ENCODE measurements at regions of chr16 and their contacts with region 1.

Region 1: DNA sequence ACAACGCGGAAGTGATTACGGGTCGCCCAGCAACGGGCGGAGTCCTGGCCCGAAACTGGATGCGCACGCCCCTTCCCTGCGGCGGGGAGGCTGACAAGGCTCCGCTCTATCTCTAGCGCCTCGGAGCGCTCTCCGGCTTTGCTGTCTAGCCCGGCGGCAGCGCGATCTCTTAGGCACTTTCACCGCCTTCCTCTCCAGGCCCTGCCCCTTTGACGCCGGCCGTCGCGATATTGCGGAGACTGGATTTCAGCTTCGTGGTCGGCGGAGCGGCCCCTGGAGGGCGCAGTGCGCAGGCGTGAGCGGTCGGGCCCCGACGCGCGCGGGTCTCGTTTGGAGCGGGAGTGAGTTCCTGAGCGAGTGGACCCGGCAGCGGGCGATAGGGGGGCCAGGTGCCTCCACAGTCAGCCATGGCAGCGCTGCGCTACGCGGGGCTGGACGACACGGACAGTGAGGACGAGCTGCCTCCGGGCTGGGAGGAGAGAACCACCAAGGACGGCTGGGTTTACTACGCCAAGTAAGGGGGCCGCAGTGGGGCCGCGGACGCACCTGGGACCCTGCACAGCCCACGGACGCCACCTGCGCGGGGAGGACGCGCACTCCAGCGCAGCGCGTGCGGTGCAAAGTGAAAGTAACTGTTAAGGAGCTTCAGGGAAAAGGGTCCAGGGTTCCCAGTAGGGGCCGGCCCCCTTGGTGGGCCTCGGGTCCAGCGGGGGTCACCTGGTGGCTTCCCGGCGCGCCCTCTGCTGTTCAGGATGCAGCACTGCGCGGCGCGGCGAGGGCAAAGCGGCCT is at the start of gene WWOX:
- DNase-seq: peak; percentile 88 to 99 (median 96)
- ATAC-seq: peak; percentile 93 to 96 (median 94)
- H3K4me3 ChIP-seq: peak within 1 kb of the TSS; percentile 75 to 79
- H3K4me3 Mint-ChIP-seq: peak within 1 kb of the TSS; percentile 86 to 88 (median 87)
- H3K27ac ChIP-seq: peak within 1 kb of the TSS; percentile 84
- H3K27ac Mint-ChIP-seq: peak within 1 kb of the TSS; percentile 95 to 96
- H3K4me1 ChIP-seq: peaks cover 5 to 26% of the 10 kb centered on the region in 2 experiments
- H3K4me1 Mint-ChIP-seq: peaks cover 27 to 34% (median 28%) of the 10 kb centered on the region in 3 donors
- H3K27me3 ChIP-seq: no peaks in the 10 kb centered on the region
- H3K27me3 Mint-ChIP-seq: peaks cover 2 to 5% of the 10 kb centered on the region in 2 donors
- total RNA-seq, gene WWOX: 21.2 to 26.0 (median 22.6) TPM

Region 2: GRCh38 chr16:77199211-77199610 is 900.4 kb before region 1 on chr16 and contains the start of gene SYCE1L:
- CTCF ChIA-PET with region 1: no interaction called
- POLR2A ChIA-PET with region 1: no interaction called
- DNase-seq: no peak
- ATAC-seq: no peak
- H3K4me3 ChIP-seq: no peak within 1 kb of the TSS
- H3K4me3 Mint-ChIP-seq: no peak within 1 kb of the TSS
- H3K27ac ChIP-seq: no peak within 1 kb of the TSS
- H3K27ac Mint-ChIP-seq: no peak within 1 kb of the TSS
- H3K4me1 ChIP-seq: peaks cover 0 to 5% of the 10 kb centered on the region in 2 experiments
- H3K4me1 Mint-ChIP-seq: peaks cover 9 to 20% (median 9%) of the 10 kb centered on the region in 3 donors
- H3K27me3 ChIP-seq: no peaks in the 10 kb centered on the region
- H3K27me3 Mint-ChIP-seq: no peaks in the 10 kb centered on the region
- total RNA-seq, gene SYCE1L: 4.0 to 18.0 (median 16.7) TPM

Region 3: DNA sequence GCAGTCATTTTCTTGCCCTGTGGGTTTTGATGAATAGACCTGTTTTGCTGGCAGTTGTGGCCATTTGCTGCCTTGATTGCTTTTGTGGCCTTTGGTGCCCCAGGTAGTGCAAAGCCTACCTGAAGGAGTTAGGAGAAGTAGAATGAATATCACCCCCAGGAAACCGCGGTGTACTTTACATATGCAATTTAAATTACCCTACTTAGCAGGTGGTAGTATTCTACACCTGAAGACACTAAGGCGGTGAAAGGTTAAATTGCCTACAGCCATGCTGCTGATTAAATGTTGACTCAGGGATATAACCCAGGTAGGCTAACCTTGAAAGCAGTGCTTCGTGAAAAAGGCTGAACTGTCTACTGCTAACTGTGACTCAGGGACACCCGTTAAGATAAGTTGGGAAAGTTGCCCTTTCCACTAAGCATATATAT is 27.3 kb before region 1 on chr16:
- CTCF ChIA-PET with region 1: no interaction called
- POLR2A ChIA-PET with region 1: interaction called in 1 of 2 experiments, 20 read pairs
- DNase-seq: no peak
- ATAC-seq: no peak
- H3K4me3 ChIP-seq: no peak overlapping the region
- H3K4me3 Mint-ChIP-seq: no peak overlapping the region
- H3K27ac ChIP-seq: no peak overlapping the region
- H3K27ac Mint-ChIP-seq: no peak overlapping the region
- H3K4me1 ChIP-seq: no peaks in the 10 kb centered on the region
- H3K4me1 Mint-ChIP-seq: no peaks in the 10 kb centered on the region
- H3K27me3 ChIP-seq: peaks cover 5 to 7% of the 10 kb centered on the region in 2 experiments
- H3K27me3 Mint-ChIP-seq: peaks cover 8 to 28% of the 10 kb centered on the region in 2 donors

Region 4: GRCh38 chr16:78081341-78081740 is 18.2 kb before region 1 on chr16:
- CTCF ChIA-PET with region 1: interaction called in 1 of 2 experiments, 15 read pairs
- POLR2A ChIA-PET with region 1: no interaction called
- DNase-seq: no peak
- ATAC-seq: no peak
- H3K4me3 ChIP-seq: no peak overlapping the region
- H3K4me3 Mint-ChIP-seq: no peak overlapping the region
- H3K27ac ChIP-seq: no peak overlapping the region
- H3K27ac Mint-ChIP-seq: no peak overlapping the region
- H3K4me1 ChIP-seq: no peaks in the 10 kb centered on the region
- H3K4me1 Mint-ChIP-seq: no peaks in the 10 kb centered on the region
- H3K27me3 ChIP-seq: peaks cover 0 to 9% of the 10 kb centered on the region in 2 experiments
- H3K27me3 Mint-ChIP-seq: peaks cover 10 to 12% of the 10 kb centered on the region in 2 donors

Region 5: DNA sequence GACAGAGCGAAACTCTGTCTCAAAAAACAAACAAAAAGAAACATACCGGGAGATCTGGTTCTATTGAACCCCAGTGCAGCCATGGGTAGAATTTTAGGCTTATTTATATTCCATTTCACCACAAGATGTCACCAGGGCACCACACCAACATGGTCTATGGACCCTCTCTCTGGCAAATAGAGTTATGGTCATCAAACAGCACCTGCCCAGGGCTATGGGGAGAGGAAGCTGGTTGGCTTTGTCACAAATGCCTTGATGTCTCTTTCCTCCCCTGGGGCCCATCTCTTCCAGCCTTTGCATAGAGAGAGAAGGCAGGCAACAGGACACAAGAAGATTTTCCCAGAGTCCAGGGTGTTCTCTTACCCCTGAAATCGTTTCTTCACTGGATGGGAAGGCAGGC is 128.3 kb after region 1 on chr16:
- CTCF ChIA-PET with region 1: no interaction called
- POLR2A ChIA-PET with region 1: no interaction called
- DNase-seq: no peak
- ATAC-seq: no peak
- H3K4me3 ChIP-seq: no peak overlapping the region
- H3K4me3 Mint-ChIP-seq: no peak overlapping the region
- H3K27ac ChIP-seq: no peak overlapping the region
- H3K27ac Mint-ChIP-seq: no peak overlapping the region
- H3K4me1 ChIP-seq: no peaks in the 10 kb centered on the region
- H3K4me1 Mint-ChIP-seq: no peaks in the 10 kb centered on the region
- H3K27me3 ChIP-seq: no peaks in the 10 kb centered on the region
- H3K27me3 Mint-ChIP-seq: no peaks in the 10 kb centered on the region